ENCODE measurements at regions of chr1 and their contacts with region 1.

Region 1: DNA sequence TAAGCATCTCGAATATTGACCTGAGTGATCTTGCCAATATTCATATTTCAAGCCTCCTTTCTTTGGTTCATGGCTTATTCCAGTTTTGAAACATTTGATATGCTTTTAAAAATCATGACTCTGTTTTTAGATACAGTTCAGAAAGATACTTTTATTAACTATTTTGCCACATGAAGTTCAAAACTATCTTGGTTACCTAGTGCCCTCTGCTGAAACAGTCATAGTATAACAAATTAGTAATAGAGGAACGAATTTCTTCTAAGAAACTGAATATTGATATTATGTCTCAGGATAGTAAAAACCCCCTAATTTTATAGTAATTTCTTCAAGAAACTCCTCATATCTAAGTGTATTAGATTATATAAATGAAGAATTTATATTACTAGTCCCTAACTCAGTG is 52.6 kb upstream of the RC3H1 start:
- DNase-seq: no peak
- H3K4me3 ChIP-seq: no peak overlapping the region
- H3K27ac ChIP-seq: no peak overlapping the region
- H3K4me1 ChIP-seq: no peaks in the 10 kb centered on the region
- H3K27me3 ChIP-seq: no peaks in the 10 kb centered on the region
- CTCF ChIP-seq: no peak
- POLR2A ChIP-seq: no peak

Region 2: DNA sequence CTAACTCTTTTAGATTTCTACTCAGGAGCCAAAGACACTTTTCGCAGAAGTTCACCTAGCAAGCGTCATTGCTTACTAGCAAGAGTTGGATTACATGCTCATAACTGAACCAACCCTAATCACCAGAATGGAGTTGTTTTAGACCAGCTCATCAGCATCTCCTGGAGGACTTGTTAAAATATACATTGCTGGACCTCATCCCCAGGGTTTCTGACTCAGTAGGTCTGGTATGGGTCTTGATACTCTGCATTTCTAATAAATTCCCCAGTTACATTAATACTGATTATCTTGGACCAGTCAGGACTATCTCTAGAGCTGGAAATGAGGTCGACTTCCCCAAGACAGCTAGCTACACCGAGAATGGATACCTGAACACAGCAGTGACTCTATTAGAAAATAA is 607.3 kb before region 1 on chr1:
- intact Hi-C with region 1: no loop called
- DNase-seq: no peak
- H3K4me3 ChIP-seq: no peak overlapping the region
- H3K27ac ChIP-seq: no peak overlapping the region
- H3K4me1 ChIP-seq: no peaks in the 10 kb centered on the region
- H3K27me3 ChIP-seq: no peaks in the 10 kb centered on the region
- CTCF ChIP-seq: no peak
- POLR2A ChIP-seq: no peak

Region 3: DNA sequence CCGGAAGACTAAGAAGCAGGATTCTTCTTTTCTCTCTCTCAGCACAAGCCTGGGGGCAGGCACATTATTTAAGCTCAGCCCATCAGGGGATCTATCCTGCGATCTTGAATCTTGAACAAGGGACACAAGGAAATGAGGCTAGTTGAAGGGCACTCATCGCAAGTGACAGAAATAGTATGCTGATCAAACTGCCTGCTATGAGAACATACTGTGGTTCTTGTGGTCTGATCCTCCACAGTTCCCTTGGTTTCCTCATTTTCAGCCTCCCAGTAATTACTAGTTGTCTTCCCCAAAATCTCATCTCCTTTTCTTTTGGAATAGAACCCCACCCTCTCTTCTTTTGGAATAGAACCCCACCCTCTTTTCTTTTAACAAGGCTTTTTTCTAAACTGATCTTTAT is 411.6 kb before region 1 on chr1:
- intact Hi-C with region 1: loop called (anchors 5 kb)
- DNase-seq: no peak
- H3K4me3 ChIP-seq: no peak overlapping the region
- H3K27ac ChIP-seq: no peak overlapping the region
- H3K4me1 ChIP-seq: no peaks in the 10 kb centered on the region
- H3K27me3 ChIP-seq: no peaks in the 10 kb centered on the region
- CTCF ChIP-seq: no peak
- POLR2A ChIP-seq: no peak

Region 4: GRCh38 chr1:173914366-173914871 is 160.3 kb before region 1 on chr1:
- intact Hi-C with region 1: no loop called
- DNase-seq: no peak
- H3K4me3 ChIP-seq: no peak overlapping the region
- H3K27ac ChIP-seq: no peak overlapping the region
- H3K4me1 ChIP-seq: no peaks in the 10 kb centered on the region
- H3K27me3 ChIP-seq: no peaks in the 10 kb centered on the region
- CTCF ChIP-seq: no peak
- POLR2A ChIP-seq: no peak